ENCODE measurements at regions of chr11 and their contacts with region 1.

Region 1: DNA sequence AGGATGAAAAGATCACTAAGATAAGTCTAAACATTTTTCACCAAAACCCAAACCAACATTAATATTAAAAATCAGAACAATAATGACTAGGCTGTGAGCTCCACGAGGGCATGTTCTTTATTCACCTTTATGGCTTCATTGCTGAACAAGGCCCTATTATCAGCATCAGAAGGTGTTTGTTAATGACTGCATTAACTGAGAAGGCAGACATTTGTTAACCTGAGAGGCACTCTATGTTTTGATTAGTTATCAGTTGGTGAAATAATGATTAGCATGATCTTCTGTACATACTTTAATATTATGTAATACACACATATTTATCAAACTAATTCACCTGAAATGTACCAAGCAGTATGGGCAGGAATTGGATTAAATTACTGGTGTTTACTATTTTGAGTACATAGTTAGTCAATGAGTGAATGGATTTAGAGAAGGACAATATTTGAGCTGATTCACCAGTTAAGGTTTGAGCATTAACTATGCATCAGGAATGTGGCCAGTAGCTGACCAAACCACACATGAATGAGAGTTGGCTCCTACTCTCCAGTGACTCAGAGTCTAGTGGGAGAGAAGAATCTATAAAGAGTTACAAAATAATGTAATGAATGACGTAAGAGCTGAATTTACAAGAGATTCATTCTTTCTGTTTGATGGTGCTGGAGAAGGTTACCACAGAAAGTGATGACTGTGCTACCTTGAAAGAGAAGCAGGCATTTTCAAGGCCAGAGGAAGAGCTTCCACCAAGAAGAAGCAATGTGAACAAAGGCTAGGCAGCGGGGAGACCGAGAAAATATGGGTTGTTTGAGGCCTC is 6.7 kb downstream of the IL18 start:
- DNase-seq: peak; percentile 98
- H3K4me3 Mint-ChIP-seq: peak overlapping the region; percentile 51
- H3K27ac Mint-ChIP-seq: peak overlapping the region; percentile 76
- H3K4me1 Mint-ChIP-seq: peaks cover 39% of the 10 kb centered on the region
- H3K27me3 Mint-ChIP-seq: no peaks in the 10 kb centered on the region
- CTCF ChIP-seq: no peak

Region 2: GRCh38 chr11:112121981-112122615 is 35.1 kb before region 1 on chr11:
- CTCF ChIA-PET with region 1: no interaction called
- POLR2A ChIA-PET with region 1: interaction called, 73 read pairs
- intact Hi-C with region 1: loop called (anchors 2 kb)
- DNase-seq: no peak
- H3K4me3 Mint-ChIP-seq: no peak overlapping the region
- H3K27ac Mint-ChIP-seq: no peak overlapping the region
- H3K4me1 Mint-ChIP-seq: peaks cover 9% of the 10 kb centered on the region
- H3K27me3 Mint-ChIP-seq: no peaks in the 10 kb centered on the region
- CTCF ChIP-seq: no peak

Region 3: DNA sequence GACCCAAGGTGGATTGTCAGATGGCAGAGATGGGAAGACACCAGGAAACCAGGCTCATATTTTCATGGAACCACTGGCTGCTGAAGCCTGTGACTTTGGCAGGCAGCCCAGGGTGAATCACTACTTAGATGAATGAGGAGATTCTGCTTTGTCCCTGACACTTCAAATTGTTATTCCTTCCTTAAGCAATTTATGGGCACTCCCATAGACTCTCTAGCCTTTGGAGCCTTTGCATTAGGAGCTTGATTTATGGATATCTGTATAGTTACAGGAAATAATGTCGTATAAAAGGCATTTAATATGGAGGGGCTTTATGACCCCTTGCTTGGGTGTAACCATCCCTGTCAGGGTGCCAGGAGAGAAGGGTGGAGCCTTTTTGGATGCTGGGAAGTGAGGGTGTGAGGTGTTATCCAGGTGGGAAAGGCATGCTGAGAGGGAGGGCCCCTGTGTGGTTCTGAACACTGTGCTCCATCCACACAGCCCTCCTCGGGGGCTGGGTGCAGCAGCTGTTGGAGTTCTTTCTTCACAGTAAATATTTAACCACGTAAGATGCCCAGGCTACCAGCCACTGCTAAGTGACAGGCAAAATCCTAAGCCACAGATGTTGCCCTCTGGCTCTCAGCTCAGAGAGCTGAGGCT is 28.6 kb before region 1 on chr11:
- CTCF ChIA-PET with region 1: interaction called, 5 read pairs
- POLR2A ChIA-PET with region 1: interaction called, 73 read pairs
- intact Hi-C with region 1: no loop called
- DNase-seq: peak; percentile 85
- H3K4me3 Mint-ChIP-seq: peak overlapping the region; percentile 13
- H3K27ac Mint-ChIP-seq: peak overlapping the region; percentile 57
- H3K4me1 Mint-ChIP-seq: peaks cover 32% of the 10 kb centered on the region
- H3K27me3 Mint-ChIP-seq: no peaks in the 10 kb centered on the region
- CTCF ChIP-seq: no peak

Region 4: GRCh38 chr11:112174789-112175598 is 17.8 kb after region 1 on chr11 and contains the start of gene BCO2:
- CTCF ChIA-PET with region 1: interaction called, 4 read pairs
- POLR2A ChIA-PET with region 1: interaction called, 22 read pairs
- intact Hi-C with region 1: no loop called
- DNase-seq: peak; percentile 83
- H3K4me3 Mint-ChIP-seq: peak within 1 kb of the TSS; percentile 66
- H3K27ac Mint-ChIP-seq: peak within 1 kb of the TSS; percentile 93
- H3K4me1 Mint-ChIP-seq: peaks cover 15% of the 10 kb centered on the region
- H3K27me3 Mint-ChIP-seq: no peaks in the 10 kb centered on the region
- CTCF ChIP-seq: peak; percentile 83
- total RNA-seq, gene BCO2: 0.93 TPM in 1 of 2 replicates, not detected in the other